ENCODE measurements at regions of chr2 and their contacts with region 1.

Region 1: DNA sequence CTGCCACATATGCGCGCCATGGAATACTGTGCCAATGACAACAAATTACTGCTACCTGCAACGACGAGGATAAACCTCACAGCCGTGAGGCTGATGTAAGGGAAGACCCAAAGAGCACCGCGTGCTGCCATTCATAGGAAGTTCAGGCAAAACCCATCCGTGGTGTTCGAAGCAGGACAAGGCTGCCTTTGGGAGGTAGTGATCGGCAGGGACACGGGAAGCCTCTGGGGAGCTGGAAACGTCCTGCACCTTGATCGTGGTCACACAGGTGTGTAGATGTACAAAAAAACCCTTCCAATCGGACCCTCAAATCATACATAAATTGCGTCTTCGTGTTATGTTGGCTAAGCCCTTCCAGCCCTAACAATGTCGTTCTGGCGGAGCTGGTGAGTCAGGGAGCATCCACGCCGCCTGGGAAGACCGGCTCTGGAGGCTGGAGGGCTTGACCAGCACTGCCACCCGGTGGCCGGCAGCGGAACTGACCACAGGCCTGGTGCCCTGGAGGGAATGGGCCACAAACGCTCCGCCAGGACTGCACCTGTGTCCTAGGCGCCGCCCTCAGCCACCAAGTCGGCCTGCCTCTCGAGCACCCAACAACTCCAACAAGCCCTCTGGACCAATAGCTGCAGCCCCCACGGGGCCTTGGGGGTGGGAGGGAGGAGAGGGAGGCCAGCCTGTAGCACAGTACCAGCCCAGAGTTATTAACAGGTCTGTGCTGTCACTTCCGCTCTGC is 4.1 kb upstream of the NEURL3 start:
- DNase-seq: peak; percentile 84
- H3K4me3 Mint-ChIP-seq: no peak overlapping the region
- H3K27ac Mint-ChIP-seq: no peak overlapping the region
- H3K4me1 Mint-ChIP-seq: peaks cover 17% of the 10 kb centered on the region
- H3K27me3 Mint-ChIP-seq: peaks cover 8% of the 10 kb centered on the region

Region 2: GRCh38 chr2:96265840-96266679 is 243.2 kb before region 1 on chr2 and contains the starts of genes CIAO1 and TMEM127:
- CTCF ChIA-PET with region 1: interaction called, 5 read pairs
- intact Hi-C with region 1: loop called (anchors 1 kb)
- DNase-seq: peak; percentile 99
- H3K4me3 Mint-ChIP-seq: peak within 1 kb of the TSS; percentile 99
- H3K27ac Mint-ChIP-seq: peak within 1 kb of the TSS; percentile 86
- H3K4me1 Mint-ChIP-seq: peaks cover 47% of the 10 kb centered on the region
- H3K27me3 Mint-ChIP-seq: no peaks in the 10 kb centered on the region
- total RNA-seq, gene CIAO1: 59.9 to 62.2 TPM
- total RNA-seq, gene TMEM127: 12.9 to 16.1 TPM

Region 3: GRCh38 chr2:96344011-96344410 is 165.3 kb before region 1 on chr2:
- CTCF ChIA-PET with region 1: no interaction called
- intact Hi-C with region 1: no loop called
- DNase-seq: peak; percentile 17
- H3K4me3 Mint-ChIP-seq: no peak overlapping the region
- H3K27ac Mint-ChIP-seq: no peak overlapping the region
- H3K4me1 Mint-ChIP-seq: peaks cover 29% of the 10 kb centered on the region
- H3K27me3 Mint-ChIP-seq: no peaks in the 10 kb centered on the region

Region 4: GRCh38 chr2:96359310-96359709 is 150.0 kb before region 1 on chr2:
- CTCF ChIA-PET with region 1: no interaction called
- intact Hi-C with region 1: loop called (anchors 1 kb)
- DNase-seq: peak; percentile 42
- H3K4me3 Mint-ChIP-seq: no peak overlapping the region
- H3K27ac Mint-ChIP-seq: no peak overlapping the region
- H3K4me1 Mint-ChIP-seq: no peaks in the 10 kb centered on the region
- H3K27me3 Mint-ChIP-seq: no peaks in the 10 kb centered on the region

Region 5: DNA sequence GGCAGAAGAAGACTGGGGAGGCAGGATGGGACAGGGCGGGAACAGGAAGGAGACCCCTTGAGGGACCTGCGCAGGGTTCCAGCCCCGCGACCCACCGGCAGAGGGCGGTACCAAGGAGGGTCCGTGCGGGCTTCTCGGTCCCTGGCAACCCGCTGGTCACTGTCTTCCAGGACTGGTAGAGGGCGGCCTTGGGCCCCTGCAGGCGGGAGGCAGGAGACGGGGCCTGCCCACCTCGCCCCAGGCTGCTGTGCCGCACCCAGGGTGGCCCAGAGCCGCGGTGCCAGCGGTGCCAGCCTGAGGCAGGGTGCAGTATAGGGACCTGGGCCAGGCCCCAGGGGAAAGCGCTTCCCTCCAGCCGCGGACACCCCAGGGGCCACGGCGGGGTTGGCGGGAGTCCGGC is 38.6 kb before region 1 on chr2:
- CTCF ChIA-PET with region 1: interaction called, 19 read pairs
- intact Hi-C with region 1: loop called (anchors 1 kb)
- DNase-seq: peak; percentile 64
- H3K4me3 Mint-ChIP-seq: no peak overlapping the region
- H3K27ac Mint-ChIP-seq: no peak overlapping the region
- H3K4me1 Mint-ChIP-seq: peaks cover 7% of the 10 kb centered on the region
- H3K27me3 Mint-ChIP-seq: peaks cover 7% of the 10 kb centered on the region

Region 6: DNA sequence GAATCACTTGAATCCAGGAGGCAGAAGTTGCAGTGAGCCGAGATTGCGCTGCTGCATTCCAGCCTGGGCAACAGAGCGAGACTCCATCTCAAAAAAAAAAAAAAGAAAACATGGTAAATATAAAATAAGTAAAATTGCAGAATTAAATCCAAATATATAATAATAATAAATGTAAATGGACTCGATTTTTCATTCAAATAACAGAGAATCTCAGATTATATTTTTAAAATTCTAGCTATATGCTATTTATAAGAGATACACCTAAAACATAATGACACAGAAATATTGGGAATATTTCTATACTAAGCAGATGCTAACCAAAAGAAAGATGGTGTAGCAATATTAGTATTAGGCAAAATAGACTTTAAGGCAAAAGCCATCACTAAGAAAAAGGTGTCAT is 11.0 kb after region 1 on chr2:
- CTCF ChIA-PET with region 1: interaction called, 71 read pairs
- intact Hi-C with region 1: no loop called
- DNase-seq: no peak
- H3K4me3 Mint-ChIP-seq: no peak overlapping the region
- H3K27ac Mint-ChIP-seq: no peak overlapping the region
- H3K4me1 Mint-ChIP-seq: peaks cover 16% of the 10 kb centered on the region
- H3K27me3 Mint-ChIP-seq: no peaks in the 10 kb centered on the region

Region 7: GRCh38 chr2:96580771-96581170 is 71.5 kb after region 1 on chr2:
- CTCF ChIA-PET with region 1: no interaction called
- intact Hi-C with region 1: loop called (anchors 1 kb)
- DNase-seq: peak; percentile 51
- H3K4me3 Mint-ChIP-seq: no peak overlapping the region
- H3K27ac Mint-ChIP-seq: no peak overlapping the region
- H3K4me1 Mint-ChIP-seq: no peaks in the 10 kb centered on the region
- H3K27me3 Mint-ChIP-seq: no peaks in the 10 kb centered on the region

Region 8: GRCh38 chr2:96679848-96680247 is 170.6 kb after region 1 on chr2:
- CTCF ChIA-PET with region 1: no interaction called
- intact Hi-C with region 1: no loop called
- DNase-seq: no peak
- H3K4me3 Mint-ChIP-seq: no peak overlapping the region
- H3K27ac Mint-ChIP-seq: no peak overlapping the region
- H3K4me1 Mint-ChIP-seq: no peaks in the 10 kb centered on the region
- H3K27me3 Mint-ChIP-seq: peaks cover 4% of the 10 kb centered on the region